ENCODE measurements at regions of chr12 and their contacts with region 1.

Region 1: GRCh38 chr12:76083904-76084862 is at the start of gene NAP1L1:
- DNase-seq: peak; percentile 99
- ATAC-seq: peak; percentile 97
- total RNA-seq, gene NAP1L1: 267 TPM

Region 2: DNA sequence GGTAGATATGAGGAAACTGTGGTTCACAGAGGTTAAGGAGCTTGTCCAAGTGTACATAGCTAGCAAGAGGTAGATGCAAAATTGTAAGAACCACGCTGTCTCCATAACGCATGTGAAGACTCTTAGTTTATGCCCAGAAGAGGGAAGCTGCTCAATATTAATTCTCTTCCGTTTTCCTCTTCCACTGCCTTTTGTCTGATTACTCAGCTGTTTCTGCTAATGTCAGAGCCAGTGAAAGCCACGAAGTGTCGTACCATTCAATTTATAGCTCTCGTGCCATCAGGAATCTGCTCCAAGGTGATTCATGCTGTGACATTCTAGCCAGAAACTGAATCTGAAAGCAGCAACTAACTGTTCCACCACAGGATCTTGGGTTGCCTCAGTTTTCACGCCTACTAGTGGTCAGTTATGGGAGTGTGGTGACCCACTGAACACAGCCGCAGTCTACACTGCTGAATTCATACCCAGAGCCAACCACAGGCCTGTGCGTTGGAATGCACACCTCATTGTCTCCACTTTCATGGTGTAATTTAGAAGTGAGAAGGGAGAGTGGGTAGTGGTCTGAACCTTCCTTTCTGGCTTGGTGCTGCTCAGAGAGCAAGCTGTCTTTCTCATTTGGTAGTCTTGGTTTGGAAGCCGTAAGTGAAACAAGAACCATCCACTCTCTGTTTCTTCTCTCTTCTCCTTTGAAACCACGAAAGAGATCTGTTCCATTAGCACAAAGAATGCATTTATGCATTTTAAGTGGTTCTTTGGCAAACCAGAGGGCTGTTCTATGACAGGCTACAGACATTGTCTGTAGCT is 74.5 kb after region 1 on chr12:
- intact Hi-C with region 1: loop called (anchors 5 kb)
- DNase-seq: no peak
- ATAC-seq: peak; percentile 69

Region 3: DNA sequence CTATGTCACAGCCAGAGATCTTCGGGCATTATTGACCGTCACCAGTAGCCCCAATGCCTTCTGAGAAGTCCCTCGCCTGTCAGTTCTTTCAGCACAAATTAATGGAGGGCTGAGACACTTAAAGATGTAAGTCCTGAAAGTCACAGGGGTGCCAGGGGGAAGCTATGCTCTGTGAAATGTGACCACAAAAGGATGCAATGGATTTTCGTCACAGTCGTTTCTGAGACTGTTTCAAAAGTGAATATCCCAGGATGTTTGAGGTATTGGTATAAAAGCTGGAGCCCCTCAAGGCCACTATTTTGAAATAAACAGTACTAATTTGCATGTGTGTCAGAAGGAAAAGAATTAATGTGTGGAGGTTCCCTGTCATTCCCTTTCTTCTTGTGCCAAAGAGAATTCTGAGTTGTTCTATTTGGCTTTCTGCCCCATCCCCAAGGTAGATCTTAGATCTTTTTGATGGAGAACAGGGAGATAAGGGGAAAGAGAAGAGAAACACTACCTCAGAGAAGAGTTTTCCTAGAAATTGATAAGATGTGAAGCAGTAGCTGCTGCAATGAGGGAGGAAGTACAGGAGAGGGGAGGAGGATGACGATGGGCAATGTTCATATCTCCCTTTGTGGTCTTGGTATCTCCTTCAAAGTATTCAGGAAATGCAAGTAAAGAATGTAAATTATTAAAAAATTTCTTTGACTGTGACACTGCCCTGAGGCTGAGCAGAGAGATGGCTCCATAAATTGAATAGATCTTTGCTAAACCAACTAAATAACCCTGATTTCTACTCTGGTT is 102.1 kb after region 1 on chr12:
- intact Hi-C with region 1: no loop called
- DNase-seq: no peak
- ATAC-seq: no peak

Region 4: GRCh38 chr12:76266797-76267196 is 182.6 kb after region 1 on chr12:
- intact Hi-C with region 1: no loop called
- DNase-seq: no peak
- ATAC-seq: peak; percentile 93

Measured in Right ventricle myocardium inferior (tissue), 1 donor.